PC-3 (cell line): ENCODE measurements at regions of chr2 and their contacts with region 1.

Region 1: DNA sequence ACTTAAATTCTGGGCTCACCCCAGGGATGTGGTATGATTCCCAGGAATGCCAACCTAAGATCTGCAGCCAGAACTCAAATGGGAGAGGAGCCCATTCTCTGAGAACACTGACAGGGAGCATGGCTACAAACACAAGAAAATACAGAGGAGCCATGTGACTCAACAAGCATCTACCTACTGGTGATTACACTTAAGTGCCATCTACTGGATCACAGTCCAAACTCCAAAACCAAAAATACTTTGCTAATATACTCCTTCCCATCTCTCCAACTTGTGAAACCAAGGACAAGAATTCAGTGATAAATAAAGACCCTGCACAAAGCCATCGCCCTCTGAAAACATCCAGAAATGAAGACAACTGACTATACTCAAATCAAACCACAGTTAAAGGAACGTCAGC is 116.9 kb downstream of the NR4A2 start:
- DNase-seq: peak; percentile 38
- ATAC-seq: peak; percentile 55
- H3K4me3 ChIP-seq: no peak overlapping the region
- H3K27ac ChIP-seq: no peak overlapping the region
- H3K4me1 ChIP-seq: no peaks in the 10 kb centered on the region
- H3K27me3 ChIP-seq: no peaks in the 10 kb centered on the region
- CTCF ChIP-seq: peak; percentile 51

Region 2: DNA sequence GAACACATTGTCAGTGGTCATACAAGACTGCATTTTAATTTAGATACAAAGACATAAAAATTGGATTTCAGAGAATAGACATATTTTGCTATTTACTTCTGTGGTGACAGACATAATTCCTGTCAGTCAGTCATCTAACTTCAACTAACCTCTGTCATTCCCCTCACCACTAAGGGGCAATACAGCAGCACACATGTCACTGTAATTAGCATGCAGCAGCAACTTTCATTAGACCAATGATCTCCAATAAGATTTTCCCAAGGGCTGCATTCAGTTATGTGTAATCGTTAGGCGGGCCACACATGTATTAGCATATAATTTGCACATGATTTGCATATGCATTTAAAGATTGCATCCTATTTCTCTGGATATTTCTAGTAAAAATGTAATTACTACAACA is 507.6 kb before region 1 on chr2:
- CTCF ChIA-PET with region 1: no interaction called
- POLR2A ChIA-PET with region 1: no interaction called
- intact Hi-C with region 1: loop called (anchors 1 kb)
- DNase-seq: peak; percentile 20
- ATAC-seq: peak; percentile 64
- H3K4me3 ChIP-seq: no peak overlapping the region
- H3K27ac ChIP-seq: no peak overlapping the region
- H3K4me1 ChIP-seq: no peaks in the 10 kb centered on the region
- H3K27me3 ChIP-seq: 0 out of 2 replicates have a peak, but pooled peaks cover 4% of the 10 kb centered on the region
- CTCF ChIP-seq: peak; percentile 47; the same call in 1 of the 2 replicates

Region 3: DNA sequence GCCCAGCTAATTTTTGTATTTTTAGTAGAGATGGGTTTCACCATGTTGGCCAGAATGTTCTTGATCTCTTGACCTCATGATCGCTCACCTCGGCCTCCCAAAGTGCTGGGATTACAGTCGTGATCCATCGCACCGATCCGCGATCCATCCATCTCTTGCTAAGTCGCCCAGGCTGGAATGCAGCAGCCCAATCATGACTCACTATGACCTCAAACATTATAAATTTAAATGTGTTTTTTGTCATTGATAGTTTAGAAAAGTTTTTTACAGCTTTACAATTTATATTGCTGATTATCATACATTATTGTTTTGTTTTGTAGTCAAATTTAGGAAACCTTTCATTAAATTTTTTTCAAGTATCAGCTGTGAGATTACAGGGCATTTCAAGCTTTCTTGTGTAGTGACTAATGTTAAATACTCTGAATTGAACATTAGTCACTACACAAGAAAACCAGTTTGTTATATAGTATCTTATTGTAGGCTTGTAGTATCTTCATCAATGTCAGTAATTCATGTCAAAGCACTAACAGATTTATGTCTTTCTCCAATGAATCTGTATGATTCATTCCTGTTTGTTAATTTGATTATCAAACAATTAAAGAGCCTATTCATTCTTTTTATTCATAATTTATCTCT is 79.4 kb after region 1 on chr2:
- CTCF ChIA-PET with region 1: no interaction called
- POLR2A ChIA-PET with region 1: no interaction called
- intact Hi-C with region 1: no loop called
- DNase-seq: peak; percentile 34
- ATAC-seq: peak; percentile 61; the same call in 1 of the 2 replicates
- H3K4me3 ChIP-seq: no peak overlapping the region
- H3K27ac ChIP-seq: no peak overlapping the region
- H3K4me1 ChIP-seq: peaks cover 3% of the 10 kb centered on the region; the same call in 1 of the 2 replicates
- H3K27me3 ChIP-seq: no peaks in the 10 kb centered on the region
- CTCF ChIP-seq: no peak